Motor neuron (in vitro differentiated cells): ENCODE measurements at regions of chrX and their contacts with region 1.

Region 1: GRCh38 chrX:70970482-70970995 is 39.6 kb upstream of the SLC7A3 start:
- ATAC-seq: peak in 2 of 8 experiments; percentile 24 to 26
- H3K4me3 ChIP-seq: no peak overlapping the region
- H3K27ac ChIP-seq: no peak overlapping the region
- H3K4me1 ChIP-seq: no peaks in the 10 kb centered on the region

Region 2: GRCh38 chrX:69844636-69845035 is 1125.9 kb before region 1 on chrX:
- in situ Hi-C with region 1: no loop called
- ATAC-seq: no peak
- H3K4me3 ChIP-seq: no peak overlapping the region
- H3K27ac ChIP-seq: no peak overlapping the region
- H3K4me1 ChIP-seq: no peaks in the 10 kb centered on the region

Region 3: DNA sequence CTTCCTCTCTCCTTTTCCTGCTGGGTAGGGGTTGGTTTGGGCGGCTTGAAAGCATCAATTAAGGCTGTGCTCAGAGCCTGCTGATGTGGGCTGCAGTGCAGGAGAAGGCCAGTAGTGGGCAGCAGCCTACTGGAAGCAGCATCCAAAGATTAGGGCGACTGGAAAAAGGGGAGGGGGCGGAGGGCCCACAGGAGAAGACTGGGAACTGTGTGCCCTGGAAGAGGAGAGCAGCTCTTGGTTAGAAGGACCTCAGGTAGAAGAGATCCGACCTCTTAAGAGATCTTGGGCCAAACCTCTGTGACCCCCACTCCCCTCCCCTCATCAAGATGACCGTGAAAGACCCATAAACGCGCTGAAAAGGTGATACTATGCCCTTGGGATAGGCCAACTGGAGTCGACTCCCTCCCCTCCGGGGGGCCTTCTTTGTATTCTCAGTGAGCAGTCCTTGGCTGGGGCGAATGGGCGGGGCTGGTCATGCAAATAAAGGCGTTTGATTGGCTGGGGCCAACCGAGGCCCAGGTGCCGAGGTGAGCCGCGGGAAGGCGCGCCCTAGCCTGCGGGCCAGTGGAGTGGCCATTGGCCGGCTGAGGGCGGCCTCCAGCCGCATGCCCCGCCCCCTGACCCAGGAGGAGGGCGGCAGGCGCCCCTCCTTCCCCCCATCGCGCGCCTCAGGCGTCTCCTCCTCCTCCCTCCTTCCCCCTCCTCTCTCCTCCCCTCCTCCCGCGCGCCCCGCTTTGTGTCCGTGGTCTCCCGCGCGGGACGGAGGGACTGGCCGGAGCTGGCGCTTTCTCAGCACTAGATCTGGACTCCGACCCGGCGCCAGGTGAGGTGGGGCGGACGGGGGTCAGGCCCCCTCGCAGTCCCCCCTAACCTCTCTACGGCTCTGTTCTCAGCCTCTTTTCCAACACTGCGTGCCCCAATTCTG is 515.8 kb before region 1 on chrX:
- in situ Hi-C with region 1: loop called in 1 of 9 experiments (anchors 25 kb)
- ATAC-seq: peak; percentile 39 to 93 (median 88)
- H3K4me3 ChIP-seq: peak overlapping the region; percentile 44 to 68 (median 52)
- H3K27ac ChIP-seq: peak overlapping the region; percentile 91 to 94
- H3K4me1 ChIP-seq: peaks cover 8% of the 10 kb centered on the region in 2 donors

Region 4: DNA sequence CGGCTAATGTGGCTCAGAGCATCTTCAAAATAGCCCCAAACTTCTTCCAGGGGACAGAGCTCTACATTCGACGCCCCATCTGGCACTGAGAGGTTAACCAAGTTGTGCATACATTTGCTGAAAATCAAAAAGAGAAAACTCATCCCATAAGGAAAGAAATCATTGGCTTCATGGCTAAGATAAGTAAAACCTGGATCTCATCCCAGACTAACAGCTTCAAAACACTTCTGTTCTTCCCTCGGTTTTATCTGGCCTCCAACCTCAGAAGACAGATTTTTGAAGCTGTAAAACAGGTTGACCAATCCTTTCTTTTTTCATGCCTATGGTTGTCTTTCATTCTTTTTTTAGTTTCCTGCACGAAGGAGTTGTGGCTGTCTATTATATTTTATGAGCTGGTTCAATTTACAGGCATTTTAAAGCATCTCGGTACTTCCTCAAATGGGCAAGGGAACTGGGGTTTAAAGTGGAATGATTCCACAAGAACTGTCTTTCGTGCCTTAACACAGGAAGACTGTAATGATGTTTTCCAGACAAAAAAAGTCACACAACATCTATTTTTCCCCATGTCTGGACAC is 418.3 kb before region 1 on chrX:
- in situ Hi-C with region 1: no loop called
- ATAC-seq: no peak
- H3K4me3 ChIP-seq: no peak overlapping the region
- H3K27ac ChIP-seq: no peak overlapping the region
- H3K4me1 ChIP-seq: no peaks in the 10 kb centered on the region

Region 5: GRCh38 chrX:70769659-70770232 is 200.8 kb before region 1 on chrX:
- in situ Hi-C with region 1: loop called in 2 of 9 experiments (anchors 25 kb)
- ATAC-seq: no peak
- H3K4me3 ChIP-seq: no peak overlapping the region
- H3K27ac ChIP-seq: no peak overlapping the region
- H3K4me1 ChIP-seq: no peaks in the 10 kb centered on the region